ENCODE measurements at regions of chr7 and their contacts with region 1.

Region 1: DNA sequence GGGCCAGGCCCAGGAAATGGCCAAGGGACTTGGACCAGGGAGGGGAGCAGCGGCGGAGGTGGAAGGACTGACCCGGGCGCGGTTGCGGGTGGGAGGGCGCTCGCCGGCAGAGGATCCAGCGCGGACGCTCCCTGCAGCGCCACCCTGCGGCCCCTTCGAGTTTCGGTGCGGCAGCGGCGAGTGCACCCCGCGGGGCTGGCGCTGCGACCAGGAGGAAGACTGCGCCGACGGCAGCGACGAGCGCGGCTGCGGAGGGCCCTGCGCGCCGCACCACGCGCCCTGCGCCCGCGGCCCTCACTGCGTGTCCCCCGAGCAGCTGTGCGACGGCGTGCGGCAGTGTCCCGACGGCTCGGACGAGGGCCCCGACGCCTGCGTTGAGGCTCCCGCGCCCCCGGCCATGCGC is 16.8 kb upstream of the ZNF467 start:
- DNase-seq: peak; percentile 92
- H3K4me3 ChIP-seq: peak overlapping the region; percentile 15 to 21; a peak in 2 of 4 replicates
- H3K27ac ChIP-seq: no peak overlapping the region
- H3K4me1 ChIP-seq: peaks cover 0 to 32% of the 10 kb centered on the region in 2 experiments; a peak in 1 of 4 replicates
- H3K27me3 ChIP-seq: peaks cover 48% of the 10 kb centered on the region
- CTCF ChIP-seq: peak; percentile 62
- EP300 ChIP-seq: no peak
- RAD21 ChIP-seq: peak; percentile 53

Region 2: DNA sequence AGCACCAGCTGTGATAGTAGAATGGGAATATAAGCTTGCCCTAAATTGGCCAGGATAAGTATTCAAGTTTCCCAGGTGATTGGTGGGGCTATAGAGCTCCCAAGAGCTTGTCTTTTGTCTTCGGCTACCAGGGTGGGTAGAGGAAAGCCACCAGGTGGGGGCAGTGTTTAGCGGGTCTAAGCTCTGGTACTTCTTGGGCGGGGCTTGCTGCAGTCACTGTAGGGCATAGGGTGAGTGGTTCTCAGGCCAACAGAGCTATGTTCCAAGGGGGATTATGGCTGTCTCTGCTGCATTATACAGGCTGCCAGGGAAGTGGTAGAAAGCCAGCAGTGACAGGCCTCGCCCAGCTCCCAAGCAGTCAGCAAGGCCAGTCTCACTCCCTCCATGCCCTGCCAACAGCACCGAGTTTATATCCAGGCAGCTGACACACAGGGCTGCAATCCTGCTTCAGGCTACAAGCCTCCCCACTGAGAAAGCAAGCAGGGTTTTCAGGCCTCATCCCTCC is 127.5 kb before region 1 on chr7:
- CTCF ChIA-PET with region 1: interaction called, 10 read pairs
- POLR2A ChIA-PET with region 1: no interaction called
- DNase-seq: peak; percentile 44
- H3K4me3 ChIP-seq: no peak overlapping the region
- H3K27ac ChIP-seq: no peak overlapping the region
- H3K4me1 ChIP-seq: no peaks in the 10 kb centered on the region; a peak in 1 of 4 replicates
- H3K27me3 ChIP-seq: no peaks in the 10 kb centered on the region
- CTCF ChIP-seq: peak; percentile 55
- EP300 ChIP-seq: no peak
- RAD21 ChIP-seq: peak; percentile 67

Region 3: GRCh38 chr7:149764481-149765398 is 25.4 kb before region 1 on chr7:
- CTCF ChIA-PET with region 1: interaction called, 27 read pairs
- POLR2A ChIA-PET with region 1: no interaction called
- DNase-seq: peak; percentile 79
- H3K4me3 ChIP-seq: peak overlapping the region in 1 of 2 experiments; percentile 2; a peak in 1 of 4 replicates
- H3K27ac ChIP-seq: no peak overlapping the region
- H3K4me1 ChIP-seq: peaks cover 0 to 11% of the 10 kb centered on the region in 2 experiments; a peak in 1 of 4 replicates
- H3K27me3 ChIP-seq: peaks cover 91% of the 10 kb centered on the region
- CTCF ChIP-seq: peak; percentile 18
- EP300 ChIP-seq: no peak
- RAD21 ChIP-seq: no peak; the same call in 1 of the 2 replicates

Region 4: DNA sequence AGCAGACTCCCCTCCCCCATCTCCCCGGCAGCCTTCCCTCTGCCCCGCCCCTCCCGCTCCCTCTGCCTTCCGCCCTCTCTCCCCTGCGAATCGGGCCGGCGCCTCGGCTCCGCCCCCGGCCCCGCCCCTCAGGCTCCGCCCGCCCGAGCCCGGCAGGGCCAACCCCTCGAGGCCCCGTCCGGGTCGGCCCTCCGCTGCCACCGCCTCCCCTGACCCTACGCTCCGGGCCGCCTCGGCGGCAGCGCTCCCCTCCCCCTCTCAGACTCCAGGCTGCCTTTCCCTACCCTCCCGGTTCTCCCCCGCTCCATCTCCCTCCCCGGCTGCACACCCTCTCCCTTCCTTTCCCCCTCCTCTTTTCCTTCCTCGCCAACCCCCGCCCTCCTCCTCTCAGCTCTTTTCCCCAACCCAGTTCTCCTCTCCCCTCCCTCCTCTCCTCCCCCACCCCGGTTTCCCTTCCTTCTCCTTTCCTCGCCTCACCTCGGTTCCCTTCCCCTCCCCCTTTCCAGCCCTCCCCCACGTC is 18.4 kb before region 1 on chr7:
- CTCF ChIA-PET with region 1: interaction called, 132 read pairs
- POLR2A ChIA-PET with region 1: interaction called, 3 read pairs
- DNase-seq: peak; percentile 99
- H3K4me3 ChIP-seq: peak overlapping the region; percentile 61 to 65
- H3K27ac ChIP-seq: peak overlapping the region in 1 of 2 experiments; percentile 74; a peak in 1 of 4 replicates
- H3K4me1 ChIP-seq: peaks cover 4 to 33% of the 10 kb centered on the region in 2 experiments; a peak in 1 of 4 replicates
- H3K27me3 ChIP-seq: peaks cover 21% of the 10 kb centered on the region
- CTCF ChIP-seq: no peak
- EP300 ChIP-seq: no peak
- RAD21 ChIP-seq: no peak

Region 5: DNA sequence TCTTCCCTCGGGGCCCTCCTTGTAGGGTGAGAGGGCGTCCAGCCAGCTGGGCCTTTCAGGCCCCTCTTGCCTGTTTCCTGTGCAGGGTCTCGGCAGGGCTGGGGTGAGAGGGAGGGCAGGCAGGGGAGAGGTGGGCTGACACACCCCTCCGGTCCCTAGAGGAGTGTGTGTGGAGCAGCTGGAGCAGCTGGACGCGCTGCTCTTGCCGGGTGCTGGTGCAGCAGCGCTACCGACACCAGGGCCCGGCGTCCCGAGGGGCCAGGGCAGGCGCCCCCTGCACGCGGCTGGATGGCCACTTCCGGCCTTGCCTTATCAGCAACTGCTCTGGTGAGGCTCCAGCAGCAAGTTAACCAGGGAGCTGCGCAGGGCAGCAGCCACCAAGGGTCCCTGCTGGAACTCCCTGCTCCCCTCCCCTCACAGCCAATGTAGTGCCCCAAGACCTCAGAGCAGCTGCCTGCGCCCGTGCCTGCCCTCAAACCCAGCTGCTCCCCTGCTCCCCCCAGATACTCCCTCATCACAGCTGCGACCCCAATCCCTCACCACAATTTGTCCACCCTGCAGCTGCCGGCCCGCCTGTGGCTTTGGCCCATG is 32.3 kb after region 1 on chr7:
- CTCF ChIA-PET with region 1: interaction called, 17 read pairs
- POLR2A ChIA-PET with region 1: no interaction called
- DNase-seq: peak; percentile 62
- H3K4me3 ChIP-seq: no peak overlapping the region
- H3K27ac ChIP-seq: no peak overlapping the region
- H3K4me1 ChIP-seq: peaks cover 0 to 3% of the 10 kb centered on the region in 2 experiments; a peak in 1 of 4 replicates
- H3K27me3 ChIP-seq: peaks cover 8% of the 10 kb centered on the region; the same call in 1 of the 2 replicates
- CTCF ChIP-seq: no peak
- EP300 ChIP-seq: no peak
- RAD21 ChIP-seq: no peak